Endothelial cell of umbilical vein (primary cell): ENCODE measurements at regions of chr15 and their contacts with region 1.

Region 1: GRCh38 chr15:47384341-47384740 is 333.0 kb upstream of the SEMA6D start:
- DNase-seq: peak; percentile 97
- H3K4me3 ChIP-seq: no peak overlapping the region
- H3K27ac ChIP-seq: peak overlapping the region; percentile 83
- H3K4me1 ChIP-seq: peaks cover 21% of the 10 kb centered on the region
- H3K27me3 ChIP-seq: no peaks in the 10 kb centered on the region
- CTCF ChIP-seq: no peak
- POLR2A ChIP-seq: no peak

Region 2: DNA sequence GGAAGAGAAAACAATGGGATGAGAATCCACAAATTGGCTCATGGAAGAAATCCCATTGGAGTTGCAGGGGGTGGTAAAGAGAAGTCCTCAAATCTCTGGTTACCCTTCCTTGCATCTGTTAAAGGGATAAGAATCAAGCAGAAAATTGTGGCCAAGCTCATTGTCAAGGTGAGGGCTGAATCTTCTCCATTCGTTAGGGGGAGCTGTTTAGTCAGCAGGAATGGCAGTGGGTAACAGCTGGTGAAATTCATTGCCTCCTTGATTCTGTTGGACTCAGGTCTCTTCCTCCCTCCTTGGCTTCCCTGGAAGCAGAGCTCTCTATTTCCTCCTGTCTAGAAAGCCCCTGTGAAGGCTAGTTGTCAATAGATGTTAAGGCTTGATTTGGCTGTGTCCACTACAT is 10.1 kb before region 1 on chr15:
- CTCF ChIA-PET with region 1: interaction called, 43 read pairs
- POLR2A ChIA-PET with region 1: no interaction called
- dilution Hi-C with region 1: no loop called
- intact Hi-C with region 1: no loop called
- DNase-seq: peak; percentile 52
- H3K4me3 ChIP-seq: no peak overlapping the region
- H3K27ac ChIP-seq: no peak overlapping the region
- H3K4me1 ChIP-seq: no peaks in the 10 kb centered on the region
- H3K27me3 ChIP-seq: no peaks in the 10 kb centered on the region
- CTCF ChIP-seq: peak; percentile 36 to 49
- POLR2A ChIP-seq: no peak

Region 3: GRCh38 chr15:47405365-47406162 is 21.2 kb after region 1 on chr15:
- CTCF ChIA-PET with region 1: interaction called, 10 read pairs
- POLR2A ChIA-PET with region 1: no interaction called
- dilution Hi-C with region 1: no loop called
- intact Hi-C with region 1: no loop called
- DNase-seq: no peak
- H3K4me3 ChIP-seq: no peak overlapping the region
- H3K27ac ChIP-seq: no peak overlapping the region
- H3K4me1 ChIP-seq: peaks cover 13% of the 10 kb centered on the region
- H3K27me3 ChIP-seq: no peaks in the 10 kb centered on the region
- CTCF ChIP-seq: no peak
- POLR2A ChIP-seq: no peak

Region 4: GRCh38 chr15:47466351-47466750 is 82.0 kb after region 1 on chr15:
- CTCF ChIA-PET with region 1: interaction called, 4 read pairs
- POLR2A ChIA-PET with region 1: no interaction called
- dilution Hi-C with region 1: no loop called
- intact Hi-C with region 1: loop called (anchors 1 kb)
- DNase-seq: peak; percentile 84
- H3K4me3 ChIP-seq: no peak overlapping the region
- H3K27ac ChIP-seq: peak overlapping the region; percentile 93
- H3K4me1 ChIP-seq: peaks cover 42% of the 10 kb centered on the region
- H3K27me3 ChIP-seq: no peaks in the 10 kb centered on the region
- CTCF ChIP-seq: no peak
- POLR2A ChIP-seq: no peak

Region 5: GRCh38 chr15:47516558-47516957 is 132.2 kb after region 1 on chr15:
- CTCF ChIA-PET with region 1: interaction called, 4 read pairs
- POLR2A ChIA-PET with region 1: no interaction called
- dilution Hi-C with region 1: no loop called
- intact Hi-C with region 1: loop called (anchors 2 kb)
- DNase-seq: no peak
- H3K4me3 ChIP-seq: no peak overlapping the region
- H3K27ac ChIP-seq: peak overlapping the region; percentile 66
- H3K4me1 ChIP-seq: peaks cover 52% of the 10 kb centered on the region
- H3K27me3 ChIP-seq: peaks cover 0 to 3% of the 10 kb centered on the region in 2 experiments
- CTCF ChIP-seq: no peak
- POLR2A ChIP-seq: no peak